HepG2 (cell line): ENCODE measurements at regions of chr9 and their contacts with region 1.

Region 1: GRCh38 chr9:91949946-91950664 is at the start of gene ROR2:
- DNase-seq: no peak
- ATAC-seq: peak; percentile 95
- H3K4me3 ChIP-seq: peak within 1 kb of the TSS in 1 of 3 experiments; percentile 44; a peak in 1 of 6 replicates
- H3K27ac ChIP-seq: no peak within 1 kb of the TSS
- H3K4me1 ChIP-seq: no peaks in the 10 kb centered on the region
- H3K27me3 ChIP-seq: peaks cover 10 to 55% of the 10 kb centered on the region in 2 experiments
- CTCF ChIP-seq: peak; percentile 57; the same call in 1 of the 2 replicates
- EP300 ChIP-seq: no peak
- POLR2A ChIP-seq: no peak
- RAD21 ChIP-seq: peak; percentile 70
- total RNA-seq, gene ROR2: not detected in 2 replicates

Region 2: DNA sequence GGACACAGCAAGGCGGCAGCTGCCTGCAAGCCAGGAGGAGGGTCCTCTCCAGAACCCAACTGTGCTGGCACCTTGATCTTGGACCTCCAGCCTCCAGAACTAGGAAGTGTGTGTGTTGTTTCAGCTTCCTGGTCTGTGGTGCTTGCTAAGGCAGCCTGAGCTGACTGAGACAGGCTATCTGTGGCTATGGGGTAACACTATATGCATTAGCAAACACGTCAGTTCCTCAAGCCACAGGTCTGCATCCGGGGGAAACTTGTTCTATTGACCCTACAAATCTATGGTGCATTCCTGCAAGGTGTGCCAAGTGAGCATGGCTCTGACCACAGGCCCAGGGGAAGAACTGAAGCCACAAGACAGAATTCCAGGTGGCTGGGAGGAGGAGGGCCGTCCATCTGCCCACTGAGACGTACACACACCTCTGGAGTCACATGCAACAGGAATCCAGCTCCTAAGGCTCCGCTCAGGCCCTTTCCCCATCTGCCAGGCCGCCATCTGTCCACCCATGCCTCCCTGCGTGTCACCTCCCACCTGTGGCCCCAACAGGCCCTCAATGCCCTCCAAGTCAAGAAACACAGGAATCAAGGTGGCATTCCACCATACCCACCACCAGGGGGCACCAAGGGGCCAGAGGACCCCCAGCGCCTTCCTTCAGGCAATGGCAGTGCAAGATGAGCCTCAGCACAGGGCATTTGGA is 174.9 kb before region 1 on chr9:
- CTCF ChIA-PET with region 1: interaction called, 18 read pairs
- POLR2A ChIA-PET with region 1: no interaction called
- in situ Hi-C with region 1: loop called (anchors 5 kb)
- intact Hi-C with region 1: loop called (anchors 1 kb)
- DNase-seq: peak; percentile 43
- ATAC-seq: peak; percentile 92
- H3K4me3 ChIP-seq: no peak overlapping the region
- H3K27ac ChIP-seq: no peak overlapping the region
- H3K4me1 ChIP-seq: no peaks in the 10 kb centered on the region
- H3K27me3 ChIP-seq: peaks cover 7 to 65% of the 10 kb centered on the region in 2 experiments; a peak in 3 of 5 replicates
- CTCF ChIP-seq: peak; percentile 93
- EP300 ChIP-seq: no peak
- POLR2A ChIP-seq: no peak
- RAD21 ChIP-seq: peak; percentile 75

Region 3: GRCh38 chr9:91930475-91930874 is 19.6 kb before region 1 on chr9:
- CTCF ChIA-PET with region 1: no interaction called
- POLR2A ChIA-PET with region 1: no interaction called
- in situ Hi-C with region 1: no loop called
- intact Hi-C with region 1: no loop called
- DNase-seq: no peak
- ATAC-seq: no peak
- H3K4me3 ChIP-seq: no peak overlapping the region
- H3K27ac ChIP-seq: no peak overlapping the region
- H3K4me1 ChIP-seq: no peaks in the 10 kb centered on the region
- H3K27me3 ChIP-seq: peaks cover 0 to 5% of the 10 kb centered on the region in 2 experiments; a peak in 2 of 5 replicates
- CTCF ChIP-seq: no peak
- EP300 ChIP-seq: no peak
- POLR2A ChIP-seq: no peak
- RAD21 ChIP-seq: no peak

Region 4: DNA sequence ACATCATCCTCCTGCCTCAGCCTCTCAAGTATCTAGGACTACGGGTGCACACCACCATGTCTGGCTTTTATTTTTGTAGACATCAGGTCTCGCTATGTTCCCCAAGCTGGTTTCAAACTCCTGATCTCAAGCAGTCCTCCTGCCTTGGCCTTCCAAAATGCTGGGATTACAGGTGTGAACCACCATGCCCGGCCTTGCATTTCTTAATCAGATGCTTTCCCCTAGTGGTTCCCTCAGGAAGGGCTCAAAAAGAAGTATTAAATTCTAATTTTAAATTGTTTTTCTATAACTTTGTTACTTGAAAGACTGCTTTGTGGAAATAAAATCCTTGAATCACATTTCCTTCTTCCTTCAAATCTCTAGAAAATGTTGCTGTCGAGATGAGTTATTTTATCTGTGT is 79.4 kb after region 1 on chr9:
- CTCF ChIA-PET with region 1: no interaction called
- POLR2A ChIA-PET with region 1: no interaction called
- in situ Hi-C with region 1: no loop called
- intact Hi-C with region 1: loop called (anchors 2 kb)
- DNase-seq: no peak
- ATAC-seq: no peak
- H3K4me3 ChIP-seq: no peak overlapping the region
- H3K27ac ChIP-seq: no peak overlapping the region
- H3K4me1 ChIP-seq: no peaks in the 10 kb centered on the region
- H3K27me3 ChIP-seq: no peaks in the 10 kb centered on the region
- CTCF ChIP-seq: no peak
- EP300 ChIP-seq: no peak
- POLR2A ChIP-seq: no peak
- RAD21 ChIP-seq: no peak